ENCODE measurements at regions of chr18 and their contacts with region 1.

Region 1: GRCh38 chr18:9835113-9835755 is 50.5 kb upstream of the TXNDC2 start:
- DNase-seq: no peak
- ATAC-seq: no peak
- H3K4me3 ChIP-seq: no peak overlapping the region
- H3K27ac ChIP-seq: no peak overlapping the region
- H3K4me1 ChIP-seq: no peaks in the 10 kb centered on the region
- H3K27me3 ChIP-seq: peaks cover 0 to 4% of the 10 kb centered on the region in 2 experiments; a peak in 2 of 4 replicates
- CTCF ChIP-seq: no peak
- EP300 ChIP-seq: no peak
- POLR2A ChIP-seq: no peak
- RAD21 ChIP-seq: no peak

Region 2: DNA sequence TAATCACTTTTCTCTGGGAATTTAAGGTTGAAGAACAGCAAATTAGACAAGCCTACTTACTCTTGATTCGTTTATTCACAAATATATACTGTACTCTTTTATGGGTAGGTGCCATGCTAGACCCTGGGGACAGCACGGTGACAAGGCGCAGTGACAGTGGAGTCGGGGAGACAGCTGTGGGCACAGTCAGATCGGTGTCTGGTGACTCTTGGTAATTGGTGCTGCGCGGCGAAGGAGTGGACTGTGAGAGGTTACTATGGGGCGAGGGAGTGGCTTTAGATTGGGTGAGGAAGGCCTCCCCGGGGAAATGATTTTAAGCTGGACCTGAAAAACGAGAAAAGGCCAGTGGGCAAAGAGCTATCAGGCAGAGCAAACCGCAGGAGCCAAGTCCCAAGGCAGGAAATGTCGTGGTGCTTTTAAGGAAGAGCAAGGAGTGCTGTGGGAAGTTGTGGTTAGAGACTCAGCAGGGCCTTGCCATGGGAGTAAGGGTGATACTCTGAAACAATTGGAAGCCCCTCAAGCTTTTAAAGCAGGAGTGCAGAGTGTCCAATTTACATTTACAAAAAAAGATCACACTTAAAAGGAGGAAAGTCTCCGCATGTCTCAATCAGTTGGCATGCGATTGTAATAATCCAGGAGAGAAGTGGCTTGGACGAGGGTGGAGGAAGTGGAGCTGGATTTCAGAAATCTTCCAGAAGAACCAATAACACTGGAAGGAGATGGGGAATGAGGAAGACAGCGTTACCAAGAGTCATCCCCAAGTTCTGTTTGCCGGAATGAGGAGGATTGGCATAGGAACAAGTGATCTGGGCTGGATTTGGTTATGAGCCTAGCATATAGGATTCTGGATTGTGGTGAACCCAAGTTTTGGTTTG is 14.4 kb after region 1 on chr18:
- CTCF ChIA-PET with region 1: no interaction called
- POLR2A ChIA-PET with region 1: no interaction called
- RAD21 ChIA-PET with region 1: no interaction called
- SMC1A ChIA-PET with region 1: no interaction called
- in situ Hi-C with region 1: no loop called
- intact Hi-C with region 1: loop called (anchors 1 kb)
- DNase-seq: no peak
- ATAC-seq: no peak
- H3K4me3 ChIP-seq: no peak overlapping the region
- H3K27ac ChIP-seq: no peak overlapping the region
- H3K4me1 ChIP-seq: no peaks in the 10 kb centered on the region
- H3K27me3 ChIP-seq: no peaks in the 10 kb centered on the region
- CTCF ChIP-seq: no peak
- EP300 ChIP-seq: no peak
- POLR2A ChIP-seq: no peak
- RAD21 ChIP-seq: no peak

Region 3: GRCh38 chr18:9894454-9895068 is 59.3 kb after region 1 on chr18:
- CTCF ChIA-PET with region 1: no interaction called
- POLR2A ChIA-PET with region 1: no interaction called
- RAD21 ChIA-PET with region 1: no interaction called
- SMC1A ChIA-PET with region 1: no interaction called
- in situ Hi-C with region 1: loop called (anchors 5 kb)
- intact Hi-C with region 1: no loop called
- DNase-seq: no peak
- ATAC-seq: no peak
- H3K4me3 ChIP-seq: no peak overlapping the region
- H3K27ac ChIP-seq: no peak overlapping the region
- H3K4me1 ChIP-seq: no peaks in the 10 kb centered on the region
- H3K27me3 ChIP-seq: no peaks in the 10 kb centered on the region
- CTCF ChIP-seq: no peak
- EP300 ChIP-seq: no peak
- POLR2A ChIP-seq: no peak
- RAD21 ChIP-seq: no peak

Region 4: DNA sequence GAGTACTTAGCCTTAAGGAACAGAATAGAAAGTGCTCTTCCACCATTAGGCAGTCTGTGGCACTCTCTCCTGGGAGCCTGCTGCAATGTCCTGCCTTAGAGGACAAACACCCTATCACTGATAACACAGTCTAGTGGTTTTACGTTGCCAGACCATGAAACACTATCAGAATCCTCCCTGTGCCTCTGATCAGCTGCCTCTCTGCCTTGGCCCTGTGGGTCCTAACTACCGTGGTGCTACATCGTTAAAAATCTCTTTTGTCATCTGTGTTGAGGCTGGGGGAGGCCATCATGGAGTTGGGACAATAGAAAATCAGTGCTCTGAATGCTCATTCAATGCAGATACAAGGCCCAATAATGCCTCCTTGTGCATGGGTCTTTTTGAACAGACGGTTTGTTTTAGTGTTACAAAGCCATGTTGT is 607.3 kb after region 1 on chr18:
- CTCF ChIA-PET with region 1: no interaction called
- POLR2A ChIA-PET with region 1: no interaction called
- RAD21 ChIA-PET with region 1: no interaction called
- SMC1A ChIA-PET with region 1: no interaction called
- in situ Hi-C with region 1: no loop called
- intact Hi-C with region 1: no loop called
- DNase-seq: no peak
- ATAC-seq: no peak
- H3K4me3 ChIP-seq: no peak overlapping the region
- H3K27ac ChIP-seq: no peak overlapping the region
- H3K4me1 ChIP-seq: no peaks in the 10 kb centered on the region
- H3K27me3 ChIP-seq: peaks cover 0 to 4% of the 10 kb centered on the region in 2 experiments; a peak in 1 of 4 replicates
- CTCF ChIP-seq: peak in 2 of 3 experiments; percentile 6 to 18; a peak in 1 of 6 replicates
- EP300 ChIP-seq: no peak
- POLR2A ChIP-seq: no peak
- RAD21 ChIP-seq: peak; percentile 33; the same call in 1 of the 2 replicates